ENCODE measurements at regions of chr5 and their contacts with region 1.

Region 1: GRCh38 chr5:56481428-56482357 is 248.6 kb upstream of the ANKRD55 start:
- DNase-seq: peak in 4 of 5 donors; percentile 13 to 39 (median 27)
- H3K4me3 ChIP-seq: peak overlapping the region; percentile 52 to 55
- H3K4me3 Mint-ChIP-seq: peak overlapping the region; percentile 87 to 95 (median 92)
- H3K27ac ChIP-seq: peak overlapping the region; percentile 80
- H3K27ac Mint-ChIP-seq: peak overlapping the region; percentile 83 to 98 (median 95)
- H3K4me1 ChIP-seq: peaks cover 49% of the 10 kb centered on the region
- H3K4me1 Mint-ChIP-seq: peaks cover 30 to 54% (median 42%) of the 10 kb centered on the region in 4 donors
- H3K27me3 ChIP-seq: no peaks in the 10 kb centered on the region
- H3K27me3 Mint-ChIP-seq: no peaks in the 10 kb centered on the region

Region 2: DNA sequence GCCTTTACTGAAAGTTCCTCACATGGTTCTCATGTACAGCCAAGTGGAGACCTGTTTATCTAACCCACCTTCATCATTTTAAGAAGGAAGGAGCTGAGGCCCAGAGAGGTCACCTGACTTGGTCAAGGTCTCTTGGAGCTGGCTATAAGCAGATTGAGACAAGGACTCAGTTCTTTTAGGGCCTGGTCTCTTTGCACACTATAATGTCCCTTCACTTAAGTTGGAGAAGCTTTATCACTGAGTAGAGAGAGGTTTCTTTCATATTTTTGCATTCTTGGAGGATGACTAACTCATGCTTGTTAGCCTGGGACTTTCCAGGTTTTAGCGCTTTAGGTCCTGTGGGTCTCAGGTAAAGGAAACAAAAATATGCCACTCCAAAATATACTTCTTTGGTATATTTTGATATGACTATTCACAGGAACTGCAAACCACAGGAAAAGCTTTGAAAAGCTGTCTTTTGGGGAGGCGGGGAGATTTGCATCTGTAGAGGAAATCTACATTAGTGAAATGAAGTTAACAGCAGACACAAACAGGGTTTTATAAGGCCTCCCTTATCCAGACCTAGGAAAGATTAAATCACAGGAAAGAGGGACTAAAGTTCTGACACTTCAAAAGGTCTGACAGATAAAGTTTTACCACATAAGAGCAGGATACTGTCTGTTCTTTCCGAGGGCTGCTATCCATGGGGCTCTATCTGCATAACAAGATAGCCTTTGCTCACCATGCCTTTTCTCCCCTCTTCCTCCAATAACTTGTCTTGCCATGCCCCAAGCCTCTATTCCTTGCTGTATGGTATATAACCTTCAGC is 152.7 kb before region 1 on chr5:
- CTCF ChIA-PET with region 1: interaction called, 6 read pairs
- POLR2A ChIA-PET with region 1: interaction called, 14 read pairs
- intact Hi-C with region 1: loop called (anchors 5 kb)
- DNase-seq: peak; percentile 50 to 82 (median 73)
- H3K4me3 ChIP-seq: no peak overlapping the region
- H3K4me3 Mint-ChIP-seq: peak overlapping the region; percentile 47 to 80 (median 61)
- H3K27ac ChIP-seq: peak overlapping the region; percentile 67
- H3K27ac Mint-ChIP-seq: peak overlapping the region; percentile 58 to 91 (median 76)
- H3K4me1 ChIP-seq: peaks cover 59% of the 10 kb centered on the region
- H3K4me1 Mint-ChIP-seq: peaks cover 45 to 69% (median 59%) of the 10 kb centered on the region in 4 donors
- H3K27me3 ChIP-seq: no peaks in the 10 kb centered on the region
- H3K27me3 Mint-ChIP-seq: no peaks in the 10 kb centered on the region

Region 3: DNA sequence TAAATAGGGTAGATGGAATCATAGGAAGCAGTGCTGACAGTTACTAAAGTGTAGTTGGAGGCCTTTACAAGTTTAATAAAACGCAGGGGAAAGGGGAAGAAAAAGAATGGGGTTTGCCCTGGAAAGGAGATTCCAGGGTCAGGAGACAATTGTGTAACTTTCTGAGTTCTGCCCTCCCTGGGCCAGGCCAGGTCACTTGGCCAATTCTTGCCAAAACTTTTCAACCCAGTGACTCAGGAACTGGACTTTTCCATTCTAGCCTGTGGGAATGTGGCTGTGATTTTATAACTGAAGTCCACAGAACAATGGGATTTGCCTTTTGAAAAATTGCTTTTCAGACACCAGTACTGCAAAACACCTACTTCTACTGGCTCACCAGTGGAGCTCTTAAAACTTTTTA is 41.3 kb after region 1 on chr5:
- CTCF ChIA-PET with region 1: no interaction called
- POLR2A ChIA-PET with region 1: no interaction called
- intact Hi-C with region 1: no loop called
- DNase-seq: no peak
- H3K4me3 ChIP-seq: no peak overlapping the region
- H3K4me3 Mint-ChIP-seq: no peak overlapping the region
- H3K27ac ChIP-seq: no peak overlapping the region
- H3K27ac Mint-ChIP-seq: peak overlapping the region in 1 of 7 donors; percentile 36
- H3K4me1 ChIP-seq: no peaks in the 10 kb centered on the region
- H3K4me1 Mint-ChIP-seq: peaks cover 9 to 16% (median 12%) of the 10 kb centered on the region in 4 donors
- H3K27me3 ChIP-seq: no peaks in the 10 kb centered on the region
- H3K27me3 Mint-ChIP-seq: no peaks in the 10 kb centered on the region

Region 4: DNA sequence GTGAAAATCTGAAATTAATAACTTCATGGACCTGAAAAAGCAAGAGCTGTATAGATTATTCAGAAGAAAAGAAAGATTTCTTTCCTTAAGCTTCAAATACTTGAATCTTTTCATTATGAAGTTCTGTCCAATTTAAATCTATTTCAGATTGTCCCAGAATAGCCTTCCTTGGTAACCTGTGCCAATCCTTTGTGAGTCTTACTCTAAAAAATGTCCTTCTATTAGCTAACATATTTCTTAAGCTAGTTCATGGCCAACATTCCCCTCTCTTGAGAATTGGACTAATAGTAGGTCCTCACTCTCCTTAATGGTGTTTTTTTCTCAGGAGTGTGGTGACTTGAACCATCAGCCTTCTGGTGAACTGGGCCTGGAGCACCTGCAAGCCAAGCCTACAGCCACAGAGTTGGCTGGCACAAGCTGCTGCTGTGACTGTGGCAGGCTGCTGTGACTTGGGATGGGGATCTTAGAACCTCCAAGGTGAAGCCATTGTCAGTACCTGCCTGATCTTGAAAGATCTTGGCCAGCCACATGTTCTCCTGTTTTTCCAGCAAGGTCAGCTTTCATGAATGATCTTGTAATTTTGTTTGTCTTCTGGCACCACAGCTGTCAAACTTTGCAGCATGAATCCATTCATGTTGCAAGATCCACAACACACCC is 71.0 kb after region 1 on chr5:
- CTCF ChIA-PET with region 1: no interaction called
- POLR2A ChIA-PET with region 1: no interaction called
- intact Hi-C with region 1: no loop called
- DNase-seq: no peak
- H3K4me3 ChIP-seq: no peak overlapping the region
- H3K4me3 Mint-ChIP-seq: no peak overlapping the region
- H3K27ac ChIP-seq: no peak overlapping the region
- H3K27ac Mint-ChIP-seq: no peak overlapping the region
- H3K4me1 ChIP-seq: no peaks in the 10 kb centered on the region
- H3K4me1 Mint-ChIP-seq: no peaks in the 10 kb centered on the region
- H3K27me3 ChIP-seq: no peaks in the 10 kb centered on the region
- H3K27me3 Mint-ChIP-seq: peaks cover 0 to 2% of the 10 kb centered on the region in 2 donors

Region 5: DNA sequence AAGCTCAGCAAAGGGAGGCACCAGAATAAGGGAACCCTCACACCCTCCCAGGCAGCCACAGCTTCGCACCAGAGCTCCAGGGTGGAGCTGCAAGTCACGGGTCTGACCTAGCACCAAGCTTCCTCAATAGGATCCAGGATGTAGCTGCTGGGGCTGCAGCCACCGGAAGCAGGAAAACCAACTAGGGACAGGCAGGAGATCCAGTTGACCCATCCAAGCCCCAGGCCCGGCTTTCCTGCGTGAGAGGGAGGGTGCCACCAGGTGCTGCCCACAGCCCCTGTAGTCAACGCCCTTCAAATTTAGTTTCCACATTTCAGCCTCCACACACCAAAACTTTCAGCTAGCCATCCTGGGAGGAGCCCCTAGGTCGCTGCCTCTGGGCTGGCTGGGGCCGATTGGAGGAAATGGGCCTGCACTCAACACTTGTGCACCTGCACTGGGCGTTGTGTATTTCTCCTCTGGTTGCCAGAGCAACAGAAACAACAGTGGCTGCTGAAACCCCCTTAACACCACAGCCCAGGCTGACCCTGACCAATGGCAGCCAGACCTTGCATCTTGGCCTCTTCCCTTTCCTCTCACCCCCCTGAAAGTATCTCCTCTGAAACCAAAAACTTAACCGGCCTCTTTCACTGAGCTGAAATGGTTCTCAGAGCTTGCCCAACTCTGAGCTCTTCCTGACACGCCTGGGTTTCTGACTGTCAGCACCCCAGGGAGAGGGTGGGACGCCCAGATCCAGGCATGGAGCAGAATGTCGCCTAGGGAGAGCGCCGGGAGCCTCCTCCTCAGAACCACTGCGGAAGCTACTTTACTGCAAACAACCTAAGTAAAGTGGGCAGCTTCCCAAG is 107.2 kb after region 1 on chr5:
- CTCF ChIA-PET with region 1: interaction called, 5 read pairs
- POLR2A ChIA-PET with region 1: interaction called, 24 read pairs
- intact Hi-C with region 1: loop called (anchors 2 kb)
- DNase-seq: peak; percentile 73 to 88 (median 82)
- H3K4me3 ChIP-seq: no peak overlapping the region
- H3K4me3 Mint-ChIP-seq: peak overlapping the region; percentile 49 to 81 (median 68)
- H3K27ac ChIP-seq: peak overlapping the region; percentile 72
- H3K27ac Mint-ChIP-seq: peak overlapping the region; percentile 91 to 98 (median 95)
- H3K4me1 ChIP-seq: peaks cover 52% of the 10 kb centered on the region
- H3K4me1 Mint-ChIP-seq: peaks cover 52 to 74% (median 61%) of the 10 kb centered on the region in 4 donors
- H3K27me3 ChIP-seq: no peaks in the 10 kb centered on the region
- H3K27me3 Mint-ChIP-seq: no peaks in the 10 kb centered on the region

Region 6: DNA sequence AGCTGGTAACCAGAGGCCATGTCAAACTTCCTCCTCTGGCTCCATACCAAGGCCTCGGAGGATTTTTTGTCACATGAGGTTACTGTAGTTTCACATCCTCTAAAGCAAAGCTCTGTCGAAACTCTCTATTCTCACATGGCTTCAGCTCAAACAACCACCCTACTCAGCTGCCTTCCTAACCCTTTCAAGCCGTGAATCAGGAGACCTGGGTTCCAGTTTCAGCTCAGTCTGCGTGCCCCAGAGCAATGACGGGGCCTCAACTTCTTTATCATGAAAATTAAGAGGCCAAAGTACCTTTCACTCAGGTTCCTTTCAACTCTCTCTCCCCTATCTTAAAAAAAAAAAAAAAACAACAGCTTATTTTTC is 188.4 kb after region 1 on chr5:
- CTCF ChIA-PET with region 1: interaction called, 19 read pairs
- POLR2A ChIA-PET with region 1: interaction called, 12 read pairs
- intact Hi-C with region 1: no loop called
- DNase-seq: peak in 4 of 5 donors; percentile 26 to 67 (median 48)
- H3K4me3 ChIP-seq: no peak overlapping the region
- H3K4me3 Mint-ChIP-seq: peak overlapping the region in 7 of 8 donors; percentile 54 to 89 (median 76)
- H3K27ac ChIP-seq: peak overlapping the region; percentile 48
- H3K27ac Mint-ChIP-seq: peak overlapping the region; percentile 89 to 97 (median 93)
- H3K4me1 ChIP-seq: peaks cover 54% of the 10 kb centered on the region
- H3K4me1 Mint-ChIP-seq: peaks cover 23 to 52% (median 44%) of the 10 kb centered on the region in 4 donors
- H3K27me3 ChIP-seq: no peaks in the 10 kb centered on the region
- H3K27me3 Mint-ChIP-seq: no peaks in the 10 kb centered on the region

Region 7: GRCh38 chr5:56696900-56697299 is 215.2 kb after region 1 on chr5:
- CTCF ChIA-PET with region 1: no interaction called
- POLR2A ChIA-PET with region 1: interaction called, 114 read pairs
- intact Hi-C with region 1: loop called (anchors 2 kb)
- DNase-seq: peak in 1 of 5 donors; percentile 49
- H3K4me3 ChIP-seq: no peak overlapping the region
- H3K4me3 Mint-ChIP-seq: peak overlapping the region in 4 of 8 donors; percentile 11 to 60 (median 29)
- H3K27ac ChIP-seq: no peak overlapping the region
- H3K27ac Mint-ChIP-seq: peak overlapping the region; percentile 64 to 82 (median 75)
- H3K4me1 ChIP-seq: peaks cover 91% of the 10 kb centered on the region
- H3K4me1 Mint-ChIP-seq: peaks cover 72 to 98% (median 86%) of the 10 kb centered on the region in 4 donors
- H3K27me3 ChIP-seq: no peaks in the 10 kb centered on the region
- H3K27me3 Mint-ChIP-seq: no peaks in the 10 kb centered on the region

Region 8: DNA sequence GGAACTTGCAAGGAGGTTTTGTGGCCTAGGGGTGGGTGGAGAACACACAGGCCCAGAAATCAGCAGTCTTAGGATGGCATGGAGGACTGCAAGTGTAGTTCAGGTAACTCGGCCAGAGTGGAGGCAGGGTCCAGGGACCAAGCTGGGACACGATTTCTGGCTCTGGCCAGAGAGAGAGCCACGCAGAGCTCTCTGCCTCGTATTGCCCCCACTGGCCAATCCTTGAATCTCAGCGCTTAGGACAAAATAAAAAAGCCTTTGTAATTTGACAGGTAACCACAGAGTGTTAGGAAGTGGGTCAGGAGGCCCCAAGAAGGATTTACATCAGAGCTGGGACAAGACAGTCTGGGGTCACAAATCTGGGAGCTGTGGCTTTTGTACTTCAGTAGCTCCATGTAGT is 345.4 kb after region 1 on chr5:
- CTCF ChIA-PET with region 1: no interaction called
- POLR2A ChIA-PET with region 1: interaction called, 15 read pairs
- intact Hi-C with region 1: no loop called
- DNase-seq: peak in 1 of 5 donors; percentile 40
- H3K4me3 ChIP-seq: no peak overlapping the region
- H3K4me3 Mint-ChIP-seq: peak overlapping the region; percentile 67 to 86 (median 74)
- H3K27ac ChIP-seq: peak overlapping the region; percentile 53
- H3K27ac Mint-ChIP-seq: peak overlapping the region; percentile 86 to 95 (median 88)
- H3K4me1 ChIP-seq: peaks cover 98% of the 10 kb centered on the region
- H3K4me1 Mint-ChIP-seq: peaks cover 75 to 98% (median 88%) of the 10 kb centered on the region in 4 donors
- H3K27me3 ChIP-seq: no peaks in the 10 kb centered on the region
- H3K27me3 Mint-ChIP-seq: no peaks in the 10 kb centered on the region

Region 9: GRCh38 chr5:57173185-57174127 is 691.8 kb after region 1 on chr5 and contains the start of gene GPBP1:
- CTCF ChIA-PET with region 1: no interaction called
- POLR2A ChIA-PET with region 1: no interaction called
- intact Hi-C with region 1: loop called (anchors 2 kb)
- DNase-seq: peak; percentile 98 to 99 (median 99)
- H3K4me3 ChIP-seq: peak within 1 kb of the TSS; percentile 70 to 87
- H3K4me3 Mint-ChIP-seq: peak within 1 kb of the TSS; percentile 96 to 99 (median 98)
- H3K27ac ChIP-seq: peak within 1 kb of the TSS; percentile 99
- H3K27ac Mint-ChIP-seq: peak within 1 kb of the TSS; percentile 98 to 100 (median 99)
- H3K4me1 ChIP-seq: peaks cover 37% of the 10 kb centered on the region
- H3K4me1 Mint-ChIP-seq: peaks cover 14 to 53% (median 25%) of the 10 kb centered on the region in 4 donors
- H3K27me3 ChIP-seq: no peaks in the 10 kb centered on the region
- H3K27me3 Mint-ChIP-seq: no peaks in the 10 kb centered on the region
- total RNA-seq, gene GPBP1: 136 to 137 TPM